Posterior cingulate gyrus (tissue), 11 donors: ENCODE measurements at regions of chr3 and their contacts with region 1.

Region 1: DNA sequence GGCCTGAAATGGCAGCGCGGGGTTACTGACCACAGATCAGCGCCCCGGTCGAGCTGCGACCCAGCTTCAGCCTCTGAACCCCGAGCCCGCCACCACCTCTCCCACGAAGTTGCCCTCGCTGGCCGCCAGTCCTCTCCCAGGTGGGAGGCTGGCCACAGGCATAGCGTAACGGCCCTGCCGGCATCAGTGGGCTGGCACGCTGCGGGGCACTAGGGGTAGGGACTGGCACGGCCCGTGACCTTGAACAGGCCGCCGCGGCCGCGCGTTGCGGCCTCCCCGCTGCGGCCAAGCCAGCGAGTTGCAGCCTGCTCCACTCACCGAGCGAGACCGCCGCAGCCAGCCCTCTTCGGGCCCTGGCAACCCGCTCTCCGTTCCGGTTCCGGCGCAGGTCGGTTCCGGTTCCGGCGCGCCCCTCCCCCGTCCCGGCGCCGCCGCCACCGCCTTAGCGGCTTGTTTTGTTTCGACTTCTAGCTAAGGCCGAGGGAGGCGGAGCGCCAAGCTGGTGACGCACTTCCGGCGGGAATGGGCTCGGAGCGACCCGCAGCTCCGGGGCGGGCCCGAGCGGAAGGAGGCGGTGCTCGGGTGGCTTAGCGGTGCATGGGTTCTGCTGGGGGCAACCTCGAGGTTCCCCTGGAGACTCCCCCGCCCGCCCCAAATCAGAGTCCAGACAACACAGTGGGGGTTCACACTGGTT is at the start of gene USP19:
- DNase-seq: peak; percentile 91 to 99 (median 95)

Region 2: GRCh38 chr3:49422379-49423248 is 302.0 kb after region 1 on chr3 and contains the start of gene AMT:
- intact Hi-C with region 1: loop called (anchors 10 kb)
- DNase-seq: peak in 9 of 10 donors; percentile 30 to 93 (median 46)